PC-9 (cell line): ENCODE measurements at regions of chr4 and their contacts with region 1.

Region 1: GRCh38 chr4:11264841-11265240 is 163.9 kb downstream of the HS3ST1 start:
- DNase-seq: no peak
- H3K4me3 ChIP-seq: no peak overlapping the region
- H3K27ac ChIP-seq: no peak overlapping the region
- H3K4me1 ChIP-seq: no peaks in the 10 kb centered on the region
- H3K27me3 ChIP-seq: no peaks in the 10 kb centered on the region
- CTCF ChIP-seq: no peak

Region 2: GRCh38 chr4:10492464-10492863 is 772.4 kb before region 1 on chr4:
- CTCF ChIA-PET with region 1: no interaction called
- POLR2A ChIA-PET with region 1: no interaction called
- intact Hi-C with region 1: no loop called
- DNase-seq: no peak
- H3K4me3 ChIP-seq: no peak overlapping the region
- H3K27ac ChIP-seq: no peak overlapping the region
- H3K4me1 ChIP-seq: no peaks in the 10 kb centered on the region
- H3K27me3 ChIP-seq: peaks cover 6% of the 10 kb centered on the region
- CTCF ChIP-seq: no peak

Region 3: DNA sequence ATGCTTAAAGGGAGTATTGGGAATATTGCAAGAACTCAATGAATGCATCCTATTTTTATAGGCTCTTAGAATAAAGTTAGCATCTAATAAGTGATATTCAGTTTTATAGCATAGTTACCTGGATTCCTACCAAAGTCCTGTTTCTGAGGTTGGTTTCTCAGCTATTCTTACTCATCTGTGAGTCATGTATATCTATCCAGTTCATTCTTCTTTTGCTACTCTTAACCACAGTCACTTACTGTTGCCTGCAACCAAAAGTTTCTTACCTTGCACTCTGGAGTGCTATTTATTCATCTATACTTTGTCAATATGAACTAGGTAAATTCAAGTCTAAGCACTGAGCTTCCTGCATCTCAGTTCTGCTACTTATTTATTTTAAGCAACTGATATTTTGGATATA is 158.7 kb before region 1 on chr4:
- CTCF ChIA-PET with region 1: no interaction called
- POLR2A ChIA-PET with region 1: no interaction called
- intact Hi-C with region 1: no loop called
- DNase-seq: no peak
- H3K4me3 ChIP-seq: no peak overlapping the region
- H3K27ac ChIP-seq: no peak overlapping the region
- H3K4me1 ChIP-seq: no peaks in the 10 kb centered on the region
- H3K27me3 ChIP-seq: no peaks in the 10 kb centered on the region
- CTCF ChIP-seq: no peak

Region 4: GRCh38 chr4:11182586-11183355 is 82.1 kb before region 1 on chr4:
- CTCF ChIA-PET with region 1: no interaction called
- POLR2A ChIA-PET with region 1: no interaction called
- intact Hi-C with region 1: no loop called
- DNase-seq: no peak
- H3K4me3 ChIP-seq: no peak overlapping the region
- H3K27ac ChIP-seq: no peak overlapping the region
- H3K4me1 ChIP-seq: no peaks in the 10 kb centered on the region
- H3K27me3 ChIP-seq: no peaks in the 10 kb centered on the region
- CTCF ChIP-seq: no peak

Region 5: GRCh38 chr4:11297201-11297600 is 32.4 kb after region 1 on chr4:
- CTCF ChIA-PET with region 1: no interaction called
- POLR2A ChIA-PET with region 1: no interaction called
- intact Hi-C with region 1: loop called (anchors 1 kb)
- DNase-seq: no peak
- H3K4me3 ChIP-seq: no peak overlapping the region
- H3K27ac ChIP-seq: no peak overlapping the region
- H3K4me1 ChIP-seq: no peaks in the 10 kb centered on the region
- H3K27me3 ChIP-seq: no peaks in the 10 kb centered on the region
- CTCF ChIP-seq: no peak

Region 6: GRCh38 chr4:11456436-11456835 is 191.6 kb after region 1 on chr4:
- CTCF ChIA-PET with region 1: no interaction called
- POLR2A ChIA-PET with region 1: no interaction called
- intact Hi-C with region 1: no loop called
- DNase-seq: no peak
- H3K4me3 ChIP-seq: no peak overlapping the region
- H3K27ac ChIP-seq: no peak overlapping the region
- H3K4me1 ChIP-seq: no peaks in the 10 kb centered on the region
- H3K27me3 ChIP-seq: no peaks in the 10 kb centered on the region
- CTCF ChIP-seq: no peak